K562 (cell line): ENCODE measurements at regions of chr6 and their contacts with region 1.

Region 1: GRCh38 chr6:20401205-20402091 is at the start of gene E2F3:
- DNase-seq: peak; percentile 98 to 100 (median 98)
- ATAC-seq: peak; percentile 84
- H3K4me3 ChIP-seq: peak within 1 kb of the TSS; percentile 60
- H3K27ac ChIP-seq: peak within 1 kb of the TSS; percentile 95
- H3K4me1 ChIP-seq: peaks cover 12 to 19% of the 10 kb centered on the region in 2 experiments
- H3K27me3 ChIP-seq: no peaks in the 10 kb centered on the region
- CTCF ChIP-seq: no peak
- EP300 ChIP-seq: no peak
- POLR2A ChIP-seq: peak; percentile 99
- RAD21 ChIP-seq: peak; percentile 19 to 20; a peak in 2 of 4 replicates
- polyA plus RNA-seq, gene E2F3: 11.8 to 14.8 TPM

Region 2: GRCh38 chr6:20092071-20092566 is 309.3 kb before region 1 on chr6:
- CTCF ChIA-PET with region 1: no interaction called
- POLR2A ChIA-PET with region 1: no interaction called
- in situ Hi-C with region 1: no loop called
- intact Hi-C with region 1: loop called (anchors 2 kb)
- DNase-seq: peak; percentile 39 to 69 (median 44)
- ATAC-seq: peak; percentile 66
- H3K4me3 ChIP-seq: no peak overlapping the region
- H3K27ac ChIP-seq: no peak overlapping the region
- H3K4me1 ChIP-seq: no peaks in the 10 kb centered on the region
- H3K27me3 ChIP-seq: no peaks in the 10 kb centered on the region
- CTCF ChIP-seq: peak; percentile 59 to 85 (median 69); a peak in 5 of 6 replicates
- EP300 ChIP-seq: no peak
- POLR2A ChIP-seq: no peak
- RAD21 ChIP-seq: peak; percentile 83 to 95

Region 3: DNA sequence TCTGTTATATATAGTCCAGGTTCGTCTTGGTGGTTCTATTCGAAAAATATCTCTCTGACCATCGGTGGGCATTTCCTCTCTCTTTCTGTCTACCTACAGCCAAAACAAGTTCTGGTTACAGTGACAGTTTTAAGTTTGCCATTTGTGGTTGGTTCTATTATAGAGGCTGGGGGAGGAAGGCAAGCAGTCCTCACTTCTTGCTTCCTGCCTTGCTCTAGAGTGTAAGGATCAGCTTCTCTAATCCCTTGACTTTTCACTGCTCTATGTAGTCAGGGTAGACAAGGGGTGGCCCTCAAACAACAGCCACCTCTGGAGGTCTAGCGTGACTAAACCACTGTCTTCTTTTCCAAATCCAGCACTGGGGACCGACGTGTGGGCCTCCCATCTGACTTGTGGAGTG is 16.4 kb after region 1 on chr6:
- CTCF ChIA-PET with region 1: interaction called, 3 read pairs
- POLR2A ChIA-PET with region 1: interaction called, 43 read pairs
- in situ Hi-C with region 1: no loop called
- intact Hi-C with region 1: no loop called
- DNase-seq: peak in 2 of 4 experiments; percentile 82 to 88
- ATAC-seq: peak; percentile 87
- H3K4me3 ChIP-seq: no peak overlapping the region; the same call in 1 of the 2 replicates
- H3K27ac ChIP-seq: peak overlapping the region; percentile 76
- H3K4me1 ChIP-seq: peaks cover 26 to 64% of the 10 kb centered on the region in 2 experiments
- H3K27me3 ChIP-seq: no peaks in the 10 kb centered on the region
- CTCF ChIP-seq: peak in 2 of 3 experiments; percentile 14 to 24; a peak in 2 of 6 replicates
- EP300 ChIP-seq: peak; percentile 65; the same call in 1 of the 2 replicates
- POLR2A ChIP-seq: peak; percentile 52
- RAD21 ChIP-seq: peak; percentile 25 to 52; a peak in 3 of 4 replicates

Region 4: GRCh38 chr6:20444786-20445271 is 43.4 kb after region 1 on chr6:
- CTCF ChIA-PET with region 1: no interaction called
- POLR2A ChIA-PET with region 1: interaction called, 4 read pairs
- in situ Hi-C with region 1: no loop called
- intact Hi-C with region 1: loop called (anchors 1 kb)
- DNase-seq: peak; percentile 60 to 94 (median 74)
- ATAC-seq: peak; percentile 89
- H3K4me3 ChIP-seq: no peak overlapping the region
- H3K27ac ChIP-seq: peak overlapping the region; percentile 70
- H3K4me1 ChIP-seq: peaks cover 21 to 48% of the 10 kb centered on the region in 2 experiments; a peak in 4 of 5 replicates
- H3K27me3 ChIP-seq: no peaks in the 10 kb centered on the region
- CTCF ChIP-seq: no peak
- EP300 ChIP-seq: peak; percentile 87; the same call in 1 of the 2 replicates
- POLR2A ChIP-seq: no peak
- RAD21 ChIP-seq: no peak

Region 5: GRCh38 chr6:20534295-20535262 is 133.1 kb after region 1 on chr6 and contains the start of gene CDKAL1:
- CTCF ChIA-PET with region 1: interaction called, 14 read pairs
- POLR2A ChIA-PET with region 1: interaction called, 15 read pairs
- in situ Hi-C with region 1: loop called (anchors 5 kb)
- intact Hi-C with region 1: loop called (anchors 1 kb)
- DNase-seq: peak; percentile 81 to 98 (median 86)
- ATAC-seq: peak; percentile 91
- H3K4me3 ChIP-seq: peak within 1 kb of the TSS; percentile 88
- H3K27ac ChIP-seq: peak within 1 kb of the TSS; percentile 93
- H3K4me1 ChIP-seq: peaks cover 7 to 16% of the 10 kb centered on the region in 2 experiments; a peak in 3 of 5 replicates
- H3K27me3 ChIP-seq: no peaks in the 10 kb centered on the region
- CTCF ChIP-seq: no peak
- EP300 ChIP-seq: peak; percentile 46; the same call in 1 of the 2 replicates
- POLR2A ChIP-seq: peak; percentile 93
- RAD21 ChIP-seq: no peak
- polyA plus RNA-seq, gene CDKAL1: 15.5 to 16.4 TPM

Region 6: DNA sequence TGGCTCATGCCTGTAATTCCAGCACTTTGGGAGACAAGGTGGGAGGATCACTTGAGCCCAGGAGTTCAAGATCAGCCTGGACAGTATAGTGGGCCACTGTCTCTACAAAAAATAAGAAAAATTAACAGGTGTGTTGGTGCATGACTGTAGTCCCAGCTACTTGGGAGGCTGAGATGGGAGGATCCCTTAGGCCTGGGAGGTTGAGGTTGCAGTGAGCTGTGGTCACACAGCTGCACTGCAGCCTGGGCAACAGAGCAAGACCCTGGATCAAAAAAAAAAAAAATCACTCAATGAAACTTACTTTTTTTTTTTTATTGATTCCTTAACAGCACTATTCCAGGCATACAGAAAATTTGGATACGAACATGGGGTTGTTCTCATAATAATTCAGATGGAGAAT is 146.8 kb after region 1 on chr6:
- CTCF ChIA-PET with region 1: no interaction called
- POLR2A ChIA-PET with region 1: no interaction called
- in situ Hi-C with region 1: no loop called
- intact Hi-C with region 1: no loop called
- DNase-seq: no peak
- ATAC-seq: no peak
- H3K4me3 ChIP-seq: no peak overlapping the region
- H3K27ac ChIP-seq: no peak overlapping the region
- H3K4me1 ChIP-seq: no peaks in the 10 kb centered on the region
- H3K27me3 ChIP-seq: no peaks in the 10 kb centered on the region
- CTCF ChIP-seq: no peak
- EP300 ChIP-seq: no peak
- POLR2A ChIP-seq: no peak
- RAD21 ChIP-seq: no peak

Region 7: DNA sequence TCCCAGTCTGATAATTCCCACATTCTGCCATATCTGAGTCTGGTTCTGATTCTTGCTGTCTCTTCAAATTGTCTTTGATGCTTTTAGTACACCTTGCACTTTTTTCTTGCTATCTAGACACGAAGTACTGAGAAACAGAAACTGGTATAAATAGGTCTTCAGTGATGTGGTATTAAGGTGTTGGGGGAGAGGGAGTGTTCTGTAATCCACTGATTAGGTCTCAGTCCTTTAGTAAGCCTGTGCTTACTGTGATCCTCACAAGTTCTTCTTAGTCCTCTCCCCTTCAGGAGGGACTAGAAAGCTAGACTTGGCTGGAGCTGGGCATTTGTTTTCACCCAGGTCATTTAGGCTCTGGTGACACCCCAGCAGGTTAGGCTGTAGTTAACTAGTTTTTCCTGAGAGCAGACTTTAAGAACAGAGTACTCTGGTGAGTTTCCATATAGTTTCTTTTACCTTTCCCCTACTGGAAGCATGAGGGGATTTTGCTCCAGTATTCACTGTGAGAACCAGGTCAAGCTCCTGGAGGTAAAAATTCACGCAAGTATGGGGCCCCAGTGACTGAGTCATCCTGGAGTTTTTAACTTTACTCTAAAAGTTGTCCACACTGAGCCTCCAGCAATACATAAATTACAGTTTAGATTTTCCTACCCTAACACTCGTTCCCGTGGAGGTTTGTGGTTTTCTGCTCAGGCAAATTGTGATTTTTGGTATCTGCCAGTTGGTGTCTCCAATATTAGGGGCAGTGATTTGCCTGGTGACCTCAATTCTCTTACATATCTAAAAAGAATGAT is 287.5 kb after region 1 on chr6:
- CTCF ChIA-PET with region 1: no interaction called
- POLR2A ChIA-PET with region 1: no interaction called
- in situ Hi-C with region 1: no loop called
- intact Hi-C with region 1: no loop called
- DNase-seq: peak in 2 of 4 experiments; percentile 25 to 49
- ATAC-seq: peak; percentile 86
- H3K4me3 ChIP-seq: no peak overlapping the region
- H3K27ac ChIP-seq: peak overlapping the region; percentile 29; the same call in 1 of the 3 replicates
- H3K4me1 ChIP-seq: peaks cover 2 to 9% of the 10 kb centered on the region in 2 experiments; a peak in 3 of 5 replicates
- H3K27me3 ChIP-seq: no peaks in the 10 kb centered on the region
- CTCF ChIP-seq: no peak
- EP300 ChIP-seq: no peak
- POLR2A ChIP-seq: no peak
- RAD21 ChIP-seq: no peak